Left ventricle myocardium superior (tissue), 1 donor: ENCODE measurements at regions of chr12 and their contacts with region 1.

Region 1: DNA sequence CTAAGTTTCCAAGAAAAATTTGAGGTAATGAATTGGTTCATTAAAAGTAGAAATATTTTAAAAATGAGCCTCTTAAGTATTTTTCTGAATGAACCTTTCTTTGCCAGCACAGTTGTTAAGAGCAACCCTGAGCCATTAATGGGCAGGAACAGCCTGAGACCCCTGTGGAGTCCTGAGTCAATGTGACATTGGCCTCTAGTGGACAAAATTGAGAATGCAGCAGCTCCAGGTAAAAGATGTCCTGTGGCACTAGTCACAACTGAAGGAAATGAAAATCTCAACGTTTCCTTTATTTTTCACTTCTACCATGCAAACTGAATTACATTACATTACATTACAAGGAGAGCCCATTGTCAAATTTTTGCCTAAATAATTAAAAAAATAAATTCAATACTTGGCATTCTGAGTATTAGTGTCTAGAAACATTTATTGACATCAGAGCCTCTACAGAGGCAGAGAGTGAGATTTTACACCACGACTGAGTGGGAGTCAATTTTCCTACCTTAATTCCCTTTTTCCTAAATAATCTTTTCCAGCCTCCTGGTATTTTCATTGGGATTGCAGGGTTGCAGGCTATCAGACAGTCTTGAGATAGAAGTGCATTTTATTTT is 135.7 kb downstream of the PPM1H start:
- DNase-seq: no peak
- ATAC-seq: peak; percentile 81

Region 2: DNA sequence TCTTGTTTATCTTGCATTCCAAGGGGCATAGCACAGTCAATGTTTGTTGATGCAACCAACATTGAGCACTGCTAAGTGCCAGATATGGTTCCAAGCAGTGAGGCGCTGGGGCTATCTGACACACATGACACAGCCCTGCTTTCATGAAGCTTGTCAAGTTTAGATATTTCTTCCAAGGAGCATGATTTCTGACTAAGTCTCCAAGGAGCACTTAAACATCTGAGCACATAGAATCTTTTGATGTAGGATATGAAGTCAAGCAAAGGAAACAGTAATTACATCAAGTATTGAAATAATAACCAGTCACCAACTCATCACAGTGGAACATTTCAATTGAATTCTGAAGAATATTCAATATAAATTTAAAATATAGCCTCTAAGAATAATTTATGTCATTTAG is 716.8 kb before region 1 on chr12:
- intact Hi-C with region 1: no loop called
- DNase-seq: no peak
- ATAC-seq: no peak

Region 3: DNA sequence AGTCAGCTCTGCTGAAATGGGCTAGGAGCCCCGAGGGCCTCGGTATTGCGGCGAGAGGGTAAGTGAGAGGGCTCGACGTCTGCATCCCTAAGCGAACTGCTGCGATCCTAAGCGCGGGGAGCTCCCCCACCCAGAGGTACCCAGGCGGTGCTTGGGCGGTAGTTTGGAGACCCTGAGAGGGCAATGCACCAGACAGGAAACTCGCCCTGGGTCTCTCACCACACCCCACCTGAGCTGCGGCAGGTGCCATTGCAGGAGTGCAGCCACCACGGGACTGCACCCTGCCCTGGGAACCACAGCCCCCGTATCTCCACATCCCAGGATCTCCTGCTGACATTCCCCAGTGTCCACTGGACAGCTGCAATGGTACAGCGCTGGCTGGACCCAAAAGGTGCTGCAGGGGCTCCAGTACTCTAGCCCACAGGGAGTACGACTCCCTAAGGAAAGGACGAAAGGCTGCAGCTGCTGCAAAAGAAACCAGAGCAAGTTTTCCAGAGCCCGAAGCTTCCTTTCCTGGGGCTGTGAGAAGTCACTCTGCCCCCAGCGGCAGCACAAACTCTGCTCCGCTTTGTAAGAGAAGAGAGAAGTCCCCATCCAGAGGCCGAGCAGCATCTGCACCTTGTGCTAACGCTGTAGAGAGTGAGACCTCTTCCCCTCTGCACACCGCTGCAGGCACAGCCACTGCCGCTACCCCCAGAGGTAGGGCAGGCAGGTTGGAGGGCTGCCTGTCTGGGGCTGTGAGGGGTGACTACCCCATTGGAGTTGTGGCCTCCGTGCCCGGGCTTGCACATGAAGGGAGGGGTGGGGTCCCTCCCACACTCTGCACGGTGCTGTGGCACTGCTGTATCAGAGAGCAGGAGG is 363.7 kb before region 1 on chr12:
- intact Hi-C with region 1: loop called (anchors 10 kb)
- DNase-seq: peak; percentile 46
- ATAC-seq: peak; percentile 86

Region 4: DNA sequence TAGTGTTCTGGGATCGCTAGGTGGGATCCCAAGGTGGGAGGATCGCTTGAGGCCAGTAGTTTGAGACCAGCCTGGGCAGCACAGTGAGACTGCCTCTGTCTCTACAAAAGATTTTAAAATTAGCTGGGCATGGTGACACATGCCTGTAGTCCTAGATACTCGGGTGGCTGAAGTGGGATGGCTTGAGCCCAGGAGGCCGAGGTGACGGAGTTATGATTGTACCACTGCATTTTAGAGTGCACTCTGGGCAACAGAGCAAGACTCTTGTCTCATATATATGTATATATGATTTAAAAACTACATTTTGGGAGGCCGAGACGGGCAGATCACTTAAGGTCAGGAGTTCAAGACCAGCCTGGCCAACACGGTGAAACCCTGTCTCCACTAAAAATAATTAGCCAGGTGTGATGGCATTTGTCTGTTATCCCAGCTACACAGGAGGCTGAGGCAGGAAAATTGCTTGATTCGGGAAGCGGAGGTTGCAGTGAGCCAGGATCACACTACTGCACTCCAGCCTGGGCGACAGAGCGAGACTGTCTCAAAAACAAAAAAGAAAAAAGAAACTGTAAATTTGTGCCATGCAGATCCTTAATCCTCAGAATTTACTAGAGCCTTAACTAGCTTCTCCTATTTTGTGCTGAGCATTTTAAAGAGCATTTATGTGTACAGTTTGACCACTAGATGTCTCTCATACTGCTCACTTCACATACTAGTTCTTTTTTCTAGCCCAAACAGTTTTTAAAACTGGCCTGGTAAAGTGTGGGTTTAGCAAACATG is 217.8 kb before region 1 on chr12:
- intact Hi-C with region 1: loop called (anchors 2 kb)
- DNase-seq: peak; percentile 36
- ATAC-seq: peak; percentile 97

Region 5: DNA sequence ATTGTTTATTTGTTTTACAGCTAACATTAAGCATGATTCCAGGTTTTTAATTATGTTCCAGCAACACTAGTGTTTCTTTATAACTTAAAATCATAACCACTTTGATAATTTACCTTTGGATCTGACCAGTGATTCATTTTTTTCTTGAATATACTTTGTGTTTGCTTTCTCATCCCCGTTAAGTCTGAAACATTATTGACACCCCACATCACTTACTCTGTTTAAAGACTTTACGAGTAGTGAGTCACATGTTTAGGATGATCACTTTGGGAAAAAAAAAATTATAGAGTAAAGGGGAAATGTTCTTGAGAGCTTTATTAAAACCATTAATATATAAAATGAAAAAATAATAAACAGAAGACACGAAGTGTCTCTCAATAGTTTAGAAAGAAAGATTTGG is 200.4 kb before region 1 on chr12:
- intact Hi-C with region 1: no loop called
- DNase-seq: no peak
- ATAC-seq: no peak

Region 6: DNA sequence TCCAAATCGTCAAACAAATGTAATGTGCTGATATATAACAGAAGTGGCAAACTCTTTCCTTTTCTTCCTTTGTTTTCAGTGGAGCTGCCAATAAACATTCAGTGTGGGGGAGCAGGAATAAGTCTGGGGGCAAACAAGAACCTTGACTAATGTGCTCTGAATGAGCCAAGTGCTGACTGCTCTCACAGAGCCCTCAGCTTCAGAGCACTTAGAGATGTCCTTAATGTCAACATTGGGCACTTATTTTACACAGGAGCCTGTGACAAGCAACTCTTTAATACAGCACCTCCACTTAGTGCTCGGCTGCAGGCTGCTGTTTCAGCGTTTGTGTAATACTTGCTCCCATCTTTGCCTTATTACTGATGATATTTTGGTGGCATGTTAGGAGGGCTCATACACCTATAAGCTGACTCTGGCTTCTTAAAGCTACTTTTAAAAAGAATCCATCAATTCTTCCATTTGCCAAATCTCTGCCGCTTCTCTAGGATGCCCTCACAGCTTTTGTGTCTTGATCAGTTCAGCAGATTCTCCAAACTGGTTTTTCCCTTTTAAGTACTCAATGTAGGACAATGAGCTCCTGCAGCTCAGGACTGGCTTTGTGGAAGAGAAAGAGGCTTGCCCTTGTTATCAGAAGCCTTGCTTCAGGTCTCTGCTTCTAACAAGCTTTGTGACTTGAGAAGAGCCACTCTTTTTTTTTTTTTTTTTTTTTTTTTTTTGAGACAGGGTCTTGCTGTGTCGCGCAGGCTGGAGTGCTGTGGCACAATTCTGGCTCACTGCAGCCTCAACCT is 126.0 kb before region 1 on chr12:
- intact Hi-C with region 1: no loop called
- DNase-seq: no peak
- ATAC-seq: no peak